ENCODE measurements at regions of chr5 and their contacts with region 1.

Region 1: DNA sequence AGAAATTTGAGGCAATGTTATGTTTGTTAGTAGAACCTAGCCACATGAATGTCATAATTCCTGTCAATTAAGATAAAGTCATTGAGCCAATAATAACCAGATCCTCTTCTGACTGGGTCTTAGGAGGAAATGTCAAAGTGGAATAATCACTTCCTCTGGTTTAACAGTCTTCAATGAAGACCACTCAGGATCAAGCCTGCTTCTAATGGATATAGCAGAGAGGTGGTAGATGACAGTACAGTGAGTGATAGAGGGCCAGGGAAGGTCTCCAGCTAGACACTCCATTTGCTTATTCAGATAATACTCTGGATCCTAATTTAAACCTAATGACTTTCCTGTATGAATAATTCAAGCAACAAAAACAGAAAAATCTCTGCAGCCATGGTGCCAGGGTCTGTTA is 474.2 kb downstream of the DNAH5 start:
- DNase-seq: no peak
- H3K4me3 ChIP-seq: no peak overlapping the region
- H3K27ac ChIP-seq: no peak overlapping the region
- H3K4me1 ChIP-seq: no peaks in the 10 kb centered on the region
- H3K27me3 ChIP-seq: no peaks in the 10 kb centered on the region
- CTCF ChIP-seq: no peak

Region 2: GRCh38 chr5:13250450-13251291 is 219.6 kb before region 1 on chr5:
- CTCF ChIA-PET with region 1: no interaction called
- dilution Hi-C with region 1: loop called (anchors 25 kb)
- in situ Hi-C with region 1: no loop called
- intact Hi-C with region 1: no loop called
- DNase-seq: no peak
- H3K4me3 ChIP-seq: no peak overlapping the region
- H3K27ac ChIP-seq: no peak overlapping the region
- H3K4me1 ChIP-seq: peaks cover 10% of the 10 kb centered on the region
- H3K27me3 ChIP-seq: no peaks in the 10 kb centered on the region
- CTCF ChIP-seq: peak; percentile 49 to 61

Region 3: DNA sequence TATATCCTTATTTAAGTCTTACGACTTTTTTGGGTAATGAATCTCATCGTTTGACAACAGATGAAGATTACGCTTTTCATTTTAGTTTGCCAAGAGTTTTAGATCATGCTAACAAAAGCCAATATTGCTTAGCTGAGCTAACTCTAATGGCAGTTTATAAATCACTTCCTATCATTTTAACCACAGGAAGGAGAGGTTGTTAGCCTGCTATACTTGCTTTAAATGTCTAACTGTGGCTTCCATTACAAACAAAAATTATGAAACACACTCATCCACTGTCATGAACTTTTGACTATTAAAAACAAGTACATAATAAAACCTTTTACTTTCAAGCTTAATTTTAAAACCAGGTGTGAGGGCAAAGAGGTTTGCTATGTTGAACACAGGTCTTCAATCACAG is 1455.1 kb after region 1 on chr5:
- CTCF ChIA-PET with region 1: no interaction called
- dilution Hi-C with region 1: no loop called
- in situ Hi-C with region 1: no loop called
- intact Hi-C with region 1: no loop called
- DNase-seq: no peak
- H3K4me3 ChIP-seq: no peak overlapping the region
- H3K27ac ChIP-seq: peak overlapping the region; percentile 38
- H3K4me1 ChIP-seq: peaks cover 26% of the 10 kb centered on the region
- H3K27me3 ChIP-seq: no peaks in the 10 kb centered on the region
- CTCF ChIP-seq: no peak

Measured in mammary epithelial cell (primary cell).